ENCODE measurements at regions of chr2 and their contacts with region 1.

Region 1: DNA sequence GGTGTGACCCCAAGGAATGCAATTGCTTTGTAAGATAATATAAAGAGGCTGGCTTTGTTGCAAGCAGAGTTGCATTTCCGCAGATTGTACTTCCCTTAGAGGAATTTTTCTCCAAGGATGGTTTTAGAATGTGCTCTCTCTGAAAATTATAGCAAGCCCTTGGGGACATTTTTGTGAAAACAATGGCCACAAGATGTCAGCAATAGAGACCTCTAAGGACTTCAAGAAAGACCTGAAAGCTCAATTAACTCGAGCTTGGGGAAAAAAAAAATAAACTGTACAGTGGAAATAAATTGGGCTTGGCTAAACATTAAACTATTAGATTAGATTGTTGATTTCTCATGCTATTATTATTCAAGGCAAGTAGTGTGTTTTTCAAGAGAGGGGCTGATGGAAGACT is 81.3 kb upstream of the KYNU start:
- DNase-seq: peak; percentile 9
- ATAC-seq: no peak
- H3K4me3 ChIP-seq: no peak overlapping the region
- H3K4me3 Mint-ChIP-seq: no peak overlapping the region
- H3K27ac ChIP-seq: no peak overlapping the region
- H3K27ac Mint-ChIP-seq: no peak overlapping the region
- H3K4me1 ChIP-seq: no peaks in the 10 kb centered on the region
- H3K4me1 Mint-ChIP-seq: peaks cover 4% of the 10 kb centered on the region
- H3K27me3 ChIP-seq: no peaks in the 10 kb centered on the region
- H3K27me3 Mint-ChIP-seq: no peaks in the 10 kb centered on the region
- CTCF ChIP-seq: no peak

Region 2: DNA sequence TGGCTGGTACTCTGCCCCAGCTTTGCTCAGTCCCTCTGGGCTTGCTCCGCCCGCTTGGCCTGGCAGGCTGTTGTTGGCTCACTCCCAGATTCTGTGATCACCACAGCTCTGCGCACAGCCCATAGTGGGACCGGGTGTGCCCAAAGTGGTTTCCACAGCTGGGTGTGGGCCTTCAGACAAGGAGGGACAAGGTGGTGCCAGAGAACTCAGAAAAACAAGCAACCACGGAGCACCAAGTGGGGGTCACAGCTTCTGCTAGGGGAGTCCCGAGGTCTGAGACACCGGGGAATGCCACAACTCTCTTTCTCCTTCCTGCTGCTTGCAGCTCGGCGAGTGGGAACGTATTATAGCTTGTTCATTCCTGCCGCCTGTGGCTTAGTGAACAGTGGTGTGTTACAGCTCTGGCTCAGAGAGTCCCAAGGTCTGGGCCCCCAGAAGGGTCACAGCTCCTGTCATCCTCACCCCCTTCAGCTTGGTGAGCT is 72.2 kb after region 1 on chr2:
- CTCF ChIA-PET with region 1: no interaction called
- POLR2A ChIA-PET with region 1: no interaction called
- intact Hi-C with region 1: loop called (anchors 5 kb)
- DNase-seq: peak; percentile 53
- ATAC-seq: peak; percentile 12
- H3K4me3 ChIP-seq: peak overlapping the region in 3 of 5 experiments; percentile 1 to 6 (median 2)
- H3K4me3 Mint-ChIP-seq: peak overlapping the region; percentile 65
- H3K27ac ChIP-seq: peak overlapping the region; percentile 62 to 82
- H3K27ac Mint-ChIP-seq: peak overlapping the region; percentile 84
- H3K4me1 ChIP-seq: peaks cover 26 to 42% of the 10 kb centered on the region in 2 donors
- H3K4me1 Mint-ChIP-seq: peaks cover 45% of the 10 kb centered on the region
- H3K27me3 ChIP-seq: no peaks in the 10 kb centered on the region
- H3K27me3 Mint-ChIP-seq: no peaks in the 10 kb centered on the region
- CTCF ChIP-seq: no peak

Measured in B cell (primary cell).